AG04450 (cell line): ENCODE measurements at regions of chr1 and their contacts with region 1.

Region 1: DNA sequence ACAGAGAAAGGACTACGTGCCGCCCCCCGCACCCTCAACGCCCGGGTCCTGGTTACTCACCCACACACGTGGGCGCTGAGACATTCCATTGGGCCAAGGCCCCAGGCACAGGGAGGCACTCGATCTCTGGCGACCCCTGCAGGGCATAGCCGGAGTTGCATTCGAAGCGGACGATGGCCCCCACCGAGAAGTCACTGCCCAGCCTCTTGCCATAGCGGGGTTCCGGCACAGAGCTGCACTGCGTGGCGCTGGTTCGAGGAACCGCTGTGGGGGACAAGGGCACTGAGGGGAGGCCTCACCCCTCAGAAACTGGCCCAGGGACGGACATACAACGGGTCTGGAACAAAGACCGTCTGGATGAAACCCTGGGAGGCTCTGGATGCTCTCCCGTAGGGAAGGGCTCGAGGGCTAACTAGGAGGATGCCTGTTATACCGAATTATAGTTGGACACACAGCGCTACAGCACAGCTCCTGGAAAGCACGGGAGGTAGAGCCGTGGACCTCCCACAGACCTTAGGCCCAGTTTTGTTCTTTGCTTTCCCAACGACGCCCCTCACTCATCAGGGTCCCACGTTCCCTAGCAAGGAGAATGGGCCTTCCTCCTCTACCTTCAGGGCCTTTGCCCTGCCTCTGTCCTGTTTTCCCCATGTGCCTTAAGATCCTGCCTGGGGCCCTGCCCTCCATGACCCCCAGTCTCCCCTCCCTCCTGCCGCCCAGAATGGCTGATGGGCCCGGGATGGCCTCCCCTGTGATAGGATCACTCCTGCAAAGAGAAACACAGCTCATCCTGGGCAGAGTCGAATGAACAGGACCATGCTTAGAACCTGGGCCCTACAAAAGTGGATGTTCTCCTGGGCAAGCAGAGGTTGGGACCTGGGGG is 152.8 kb downstream of the ZSCAN20 start:
- DNase-seq: no peak
- H3K4me3 ChIP-seq: no peak overlapping the region
- H3K27ac ChIP-seq: no peak overlapping the region
- H3K27me3 ChIP-seq: no peaks in the 10 kb centered on the region
- CTCF ChIP-seq: peak; percentile 28

Region 2: DNA sequence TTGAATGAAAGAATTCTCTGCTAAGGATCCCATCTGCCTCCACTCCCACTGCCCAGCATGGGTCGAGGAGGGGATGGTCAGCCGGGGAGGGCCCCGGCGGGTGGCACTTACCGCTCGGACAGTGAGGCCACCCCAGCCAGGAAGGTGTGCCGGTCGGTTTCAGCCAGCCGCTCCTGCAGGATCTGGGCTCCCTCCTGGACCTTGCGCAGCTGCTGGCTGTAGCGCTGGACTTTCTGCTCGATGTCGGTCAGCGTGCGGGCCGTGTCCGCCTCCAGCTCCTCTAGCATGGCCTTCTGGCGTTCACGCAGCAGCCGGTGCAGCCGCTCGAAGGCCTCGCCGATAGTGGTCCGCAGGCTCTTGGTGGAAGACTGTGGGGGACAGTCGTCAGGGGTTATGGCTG is 465.7 kb before region 1 on chr1:
- CTCF ChIA-PET with region 1: interaction called, 12 read pairs
- POLR2A ChIA-PET with region 1: no interaction called
- DNase-seq: no peak
- H3K4me3 ChIP-seq: no peak overlapping the region
- H3K27ac ChIP-seq: no peak overlapping the region
- H3K27me3 ChIP-seq: no peaks in the 10 kb centered on the region
- CTCF ChIP-seq: no peak

Region 3: GRCh38 chr1:33599516-33600115 is 25.6 kb before region 1 on chr1:
- CTCF ChIA-PET with region 1: no interaction called
- POLR2A ChIA-PET with region 1: no interaction called
- DNase-seq: no peak
- H3K4me3 ChIP-seq: no peak overlapping the region
- H3K27ac ChIP-seq: no peak overlapping the region
- H3K27me3 ChIP-seq: no peaks in the 10 kb centered on the region
- CTCF ChIP-seq: no peak

Region 4: DNA sequence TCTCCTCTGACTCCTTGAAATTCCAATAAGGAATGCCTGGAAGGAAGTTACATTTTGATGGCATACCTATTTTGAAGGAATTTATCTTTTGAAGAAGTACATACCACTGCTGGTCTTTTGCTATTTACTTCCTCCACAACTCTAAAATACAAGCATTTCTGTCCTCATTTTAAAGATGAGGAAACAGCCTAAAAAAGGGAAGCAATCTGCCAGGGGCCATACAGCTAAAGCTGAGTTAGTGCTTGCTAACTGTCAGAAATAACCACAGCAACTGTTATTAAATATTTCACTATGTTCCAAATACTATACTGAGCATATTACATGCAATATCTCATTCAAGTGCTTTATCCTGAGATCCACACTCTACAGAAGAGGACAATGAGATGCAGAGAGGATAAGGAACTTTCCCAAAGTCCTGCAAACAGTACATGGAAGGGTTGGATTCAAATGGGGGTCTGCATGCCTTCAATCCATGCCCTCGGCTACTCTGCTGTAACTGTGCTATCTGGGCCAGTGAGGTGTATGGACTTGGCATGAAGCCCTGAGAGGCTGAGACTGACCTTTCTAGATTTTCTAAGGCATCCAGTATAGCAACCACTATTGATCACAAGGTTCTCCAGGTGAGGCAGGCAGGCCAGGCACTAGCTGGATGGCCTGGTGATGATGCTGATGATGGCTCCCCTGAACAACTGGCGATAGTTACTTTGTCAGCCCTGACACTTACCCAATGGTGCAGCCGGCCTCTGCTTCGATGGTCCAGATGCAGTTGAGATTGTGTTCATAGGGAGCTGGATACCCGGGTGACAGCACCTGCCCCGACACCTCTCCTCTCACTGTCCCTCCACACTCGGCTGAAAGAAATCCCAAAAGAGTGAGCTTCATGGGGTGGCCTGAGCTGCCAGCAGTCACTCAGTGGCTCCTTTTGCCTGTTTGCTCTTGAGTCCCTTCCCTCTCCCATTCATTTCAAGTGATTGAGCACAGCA is 67.3 kb after region 1 on chr1:
- CTCF ChIA-PET with region 1: no interaction called
- POLR2A ChIA-PET with region 1: no interaction called
- DNase-seq: no peak
- H3K4me3 ChIP-seq: no peak overlapping the region
- H3K27ac ChIP-seq: no peak overlapping the region
- H3K27me3 ChIP-seq: no peaks in the 10 kb centered on the region
- CTCF ChIP-seq: no peak

Region 5: GRCh38 chr1:33727310-33727709 is 102.1 kb after region 1 on chr1:
- CTCF ChIA-PET with region 1: no interaction called
- POLR2A ChIA-PET with region 1: no interaction called
- DNase-seq: no peak
- H3K4me3 ChIP-seq: no peak overlapping the region
- H3K27ac ChIP-seq: no peak overlapping the region
- H3K27me3 ChIP-seq: no peaks in the 10 kb centered on the region
- CTCF ChIP-seq: no peak

Region 6: GRCh38 chr1:33818071-33818470 is 192.8 kb after region 1 on chr1:
- CTCF ChIA-PET with region 1: no interaction called
- POLR2A ChIA-PET with region 1: no interaction called
- DNase-seq: no peak
- H3K4me3 ChIP-seq: no peak overlapping the region
- H3K27ac ChIP-seq: no peak overlapping the region
- H3K27me3 ChIP-seq: peaks cover 5% of the 10 kb centered on the region
- CTCF ChIP-seq: no peak